Activated naive CD4-positive, alpha-beta T cell treated with anti-CD3 and anti-CD28 coated beads for 36 hours (primary cell): ENCODE measurements at regions of chr16 and their contacts with region 1.

Region 1: GRCh38 chr16:610513-611334 is 20.1 kb upstream of the WFIKKN1 start:
- DNase-seq: peak; percentile 66
- H3K4me3 Mint-ChIP-seq: no peak overlapping the region
- H3K27ac Mint-ChIP-seq: no peak overlapping the region
- H3K4me1 Mint-ChIP-seq: peaks cover 10% of the 10 kb centered on the region
- H3K27me3 Mint-ChIP-seq: no peaks in the 10 kb centered on the region

Region 2: GRCh38 chr16:578870-579405 is 31.8 kb before region 1 on chr16:
- CTCF ChIA-PET with region 1: interaction called, 4 read pairs
- intact Hi-C with region 1: loop called (anchors 1 kb)
- DNase-seq: peak; percentile 74
- H3K4me3 Mint-ChIP-seq: no peak overlapping the region
- H3K27ac Mint-ChIP-seq: no peak overlapping the region
- H3K4me1 Mint-ChIP-seq: peaks cover 3% of the 10 kb centered on the region
- H3K27me3 Mint-ChIP-seq: no peaks in the 10 kb centered on the region

Region 3: DNA sequence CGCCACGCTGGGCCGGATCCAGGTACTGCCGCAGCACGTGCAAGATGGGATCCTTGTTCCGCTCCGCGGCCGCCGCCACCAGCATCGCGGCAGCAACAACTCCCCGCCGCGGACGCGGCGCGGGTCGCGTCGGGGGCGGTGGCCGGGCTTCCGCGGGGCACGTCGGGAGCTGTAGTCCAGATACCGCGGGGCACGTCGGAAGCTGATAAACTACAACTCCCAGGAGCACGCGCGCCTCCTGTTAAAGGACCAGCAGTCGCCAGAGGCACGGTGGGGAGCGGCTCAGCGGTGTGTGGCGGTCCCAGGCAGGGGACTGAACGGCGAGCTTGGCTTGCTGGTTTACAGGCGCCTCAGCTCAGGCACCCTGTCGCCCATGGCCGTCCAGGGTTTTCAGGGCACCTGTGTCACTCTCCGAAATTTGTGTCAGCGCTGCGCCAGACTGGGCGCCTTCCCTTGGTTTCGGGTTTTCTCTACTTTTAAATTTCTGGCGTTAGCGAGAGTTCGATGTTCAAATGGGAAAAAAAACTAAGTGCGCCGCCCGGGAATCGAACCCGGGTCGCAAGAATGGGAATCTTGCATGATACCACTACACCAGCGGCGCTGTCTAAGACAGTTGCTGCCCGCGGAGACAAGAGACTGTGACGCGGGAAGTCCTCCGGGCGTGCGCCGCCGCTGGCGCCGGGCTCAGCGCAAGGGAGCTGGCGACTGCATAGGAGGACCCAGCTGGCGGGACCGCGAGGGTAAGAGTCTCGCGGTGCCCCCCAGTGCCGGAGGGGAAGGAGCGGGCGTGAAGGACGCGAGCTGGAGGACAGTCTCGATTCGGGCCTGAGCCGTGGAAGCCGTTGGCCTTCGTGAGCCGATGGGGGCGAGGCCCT is 25.7 kb after region 1 on chr16 and contains the start of gene METTL26:
- CTCF ChIA-PET with region 1: no interaction called
- intact Hi-C with region 1: loop called (anchors 1 kb)
- DNase-seq: peak; percentile 95
- H3K4me3 Mint-ChIP-seq: peak within 1 kb of the TSS; percentile 90
- H3K27ac Mint-ChIP-seq: peak within 1 kb of the TSS; percentile 91
- H3K4me1 Mint-ChIP-seq: peaks cover 15% of the 10 kb centered on the region
- H3K27me3 Mint-ChIP-seq: no peaks in the 10 kb centered on the region
- total RNA-seq, gene METTL26: 121 to 122 TPM

Region 4: DNA sequence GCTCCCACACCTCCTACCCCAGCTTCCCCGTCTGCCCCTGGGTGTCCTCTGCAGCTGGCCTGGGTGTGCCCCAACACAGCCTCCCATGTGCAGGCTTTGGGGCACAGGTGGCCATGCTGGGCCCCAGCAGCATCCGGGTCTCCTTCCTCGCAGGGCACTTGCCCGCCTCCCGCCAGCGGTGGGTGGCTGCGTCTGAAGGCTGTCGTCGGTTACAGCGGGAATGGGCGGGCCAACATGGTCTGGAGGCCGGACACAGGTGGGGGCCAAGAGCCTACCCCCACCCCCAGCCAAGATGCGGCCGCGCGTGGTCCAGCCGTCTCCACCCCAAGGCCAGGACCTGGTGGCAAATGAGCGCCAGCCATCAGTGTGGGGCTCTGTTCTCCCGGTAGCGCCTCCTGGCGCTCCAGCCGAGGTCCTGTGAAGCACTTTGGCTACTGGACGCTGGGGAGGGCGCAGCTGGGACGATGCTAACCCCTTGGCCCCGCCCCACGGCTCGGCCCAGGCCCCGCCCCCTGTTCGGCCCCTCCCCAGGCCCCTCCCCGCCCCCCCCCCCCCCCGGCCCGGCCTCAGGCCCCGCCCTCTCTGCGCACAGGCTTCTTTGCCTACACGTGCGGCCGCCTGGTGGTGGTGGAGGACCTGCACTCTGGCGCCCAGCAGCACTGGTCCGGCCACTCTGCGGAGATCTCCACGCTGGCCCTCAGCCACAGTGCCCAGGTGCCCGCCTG is 49.9 kb after region 1 on chr16:
- CTCF ChIA-PET with region 1: no interaction called
- intact Hi-C with region 1: no loop called
- DNase-seq: peak; percentile 63
- H3K4me3 Mint-ChIP-seq: no peak overlapping the region
- H3K27ac Mint-ChIP-seq: no peak overlapping the region
- H3K4me1 Mint-ChIP-seq: peaks cover 4% of the 10 kb centered on the region
- H3K27me3 Mint-ChIP-seq: no peaks in the 10 kb centered on the region

Region 5: GRCh38 chr16:733382-734207 is 122.9 kb after region 1 on chr16:
- CTCF ChIA-PET with region 1: no interaction called
- intact Hi-C with region 1: no loop called
- DNase-seq: peak; percentile 42
- H3K4me3 Mint-ChIP-seq: no peak overlapping the region
- H3K27ac Mint-ChIP-seq: no peak overlapping the region
- H3K4me1 Mint-ChIP-seq: peaks cover 12% of the 10 kb centered on the region
- H3K27me3 Mint-ChIP-seq: no peaks in the 10 kb centered on the region